Dendritic cell treated with granulocyte-macrophage colony-stimulating factor and Interleukin-4, amounts not matched to agents 40 ng/mL and 50 ng/mL, for 4 days (primary cell): ENCODE measurements at regions of chr1 and their contacts with region 1.

Region 1: GRCh38 chr1:15684468-15685291 is 560 bp downstream of the PLEKHM2 start:
- H3K4me3 Mint-ChIP-seq: peak overlapping the region; percentile 84
- H3K27ac Mint-ChIP-seq: peak overlapping the region; percentile 92
- H3K4me1 Mint-ChIP-seq: peaks cover 69% of the 10 kb centered on the region
- H3K27me3 Mint-ChIP-seq: no peaks in the 10 kb centered on the region

Region 2: DNA sequence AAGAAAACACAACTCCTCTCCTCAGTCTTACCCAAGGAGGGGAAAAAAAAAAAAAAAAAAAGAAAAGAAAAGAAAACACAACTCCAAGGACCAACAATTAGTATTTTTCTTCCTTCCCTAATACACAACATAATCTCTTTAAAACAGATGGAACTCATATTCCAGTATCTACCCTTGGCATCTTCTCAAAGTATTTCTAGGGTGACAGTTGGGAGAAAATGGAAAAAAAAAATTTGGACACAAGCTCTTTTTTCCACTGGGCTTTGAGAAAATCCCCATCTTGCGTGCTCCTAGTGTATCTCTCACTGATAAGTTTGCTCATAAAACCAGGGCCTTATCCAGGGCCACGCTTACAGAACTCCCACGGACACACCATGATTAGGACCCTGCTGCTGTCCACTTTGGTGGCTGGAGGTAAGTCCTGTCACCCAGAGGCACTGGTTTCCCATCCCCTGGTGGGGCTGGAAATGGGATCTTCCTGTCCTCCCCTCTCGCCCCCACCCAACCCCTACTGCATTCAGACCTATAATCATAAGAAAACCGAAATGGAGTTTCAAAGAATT is 208.8 kb before region 1 on chr1 and contains the start of gene CELA2B:
- intact Hi-C with region 1: no loop called
- H3K4me3 Mint-ChIP-seq: no peak within 1 kb of the TSS
- H3K27ac Mint-ChIP-seq: no peak within 1 kb of the TSS
- H3K4me1 Mint-ChIP-seq: peaks cover 10% of the 10 kb centered on the region
- H3K27me3 Mint-ChIP-seq: peaks cover 5% of the 10 kb centered on the region

Region 3: GRCh38 chr1:15526490-15527339 is 158.0 kb before region 1 on chr1 and contains the start of gene DNAJC16:
- intact Hi-C with region 1: loop called (anchors 10 kb)
- H3K4me3 Mint-ChIP-seq: peak within 1 kb of the TSS; percentile 84
- H3K27ac Mint-ChIP-seq: peak within 1 kb of the TSS; percentile 96
- H3K4me1 Mint-ChIP-seq: peaks cover 53% of the 10 kb centered on the region
- H3K27me3 Mint-ChIP-seq: no peaks in the 10 kb centered on the region

Region 4: GRCh38 chr1:15617175-15617880 is 67.4 kb before region 1 on chr1 and contains the start of gene DDI2:
- intact Hi-C with region 1: loop called (anchors 5 kb)
- H3K4me3 Mint-ChIP-seq: peak within 1 kb of the TSS; percentile 73
- H3K27ac Mint-ChIP-seq: peak within 1 kb of the TSS; percentile 95
- H3K4me1 Mint-ChIP-seq: peaks cover 50% of the 10 kb centered on the region
- H3K27me3 Mint-ChIP-seq: peaks cover 3% of the 10 kb centered on the region

Region 5: GRCh38 chr1:15696956-15697521 is 12.4 kb after region 1 on chr1:
- intact Hi-C with region 1: loop called (anchors 2 kb)
- H3K4me3 Mint-ChIP-seq: peak overlapping the region; percentile 64
- H3K27ac Mint-ChIP-seq: peak overlapping the region; percentile 97
- H3K4me1 Mint-ChIP-seq: peaks cover 81% of the 10 kb centered on the region
- H3K27me3 Mint-ChIP-seq: no peaks in the 10 kb centered on the region

Region 6: GRCh38 chr1:16248603-16249516 is 564.2 kb after region 1 on chr1:
- intact Hi-C with region 1: no loop called
- H3K4me3 Mint-ChIP-seq: no peak overlapping the region
- H3K27ac Mint-ChIP-seq: no peak overlapping the region
- H3K4me1 Mint-ChIP-seq: peaks cover 23% of the 10 kb centered on the region
- H3K27me3 Mint-ChIP-seq: no peaks in the 10 kb centered on the region